ENCODE measurements at regions of chr18 and their contacts with region 1.

Region 1: DNA sequence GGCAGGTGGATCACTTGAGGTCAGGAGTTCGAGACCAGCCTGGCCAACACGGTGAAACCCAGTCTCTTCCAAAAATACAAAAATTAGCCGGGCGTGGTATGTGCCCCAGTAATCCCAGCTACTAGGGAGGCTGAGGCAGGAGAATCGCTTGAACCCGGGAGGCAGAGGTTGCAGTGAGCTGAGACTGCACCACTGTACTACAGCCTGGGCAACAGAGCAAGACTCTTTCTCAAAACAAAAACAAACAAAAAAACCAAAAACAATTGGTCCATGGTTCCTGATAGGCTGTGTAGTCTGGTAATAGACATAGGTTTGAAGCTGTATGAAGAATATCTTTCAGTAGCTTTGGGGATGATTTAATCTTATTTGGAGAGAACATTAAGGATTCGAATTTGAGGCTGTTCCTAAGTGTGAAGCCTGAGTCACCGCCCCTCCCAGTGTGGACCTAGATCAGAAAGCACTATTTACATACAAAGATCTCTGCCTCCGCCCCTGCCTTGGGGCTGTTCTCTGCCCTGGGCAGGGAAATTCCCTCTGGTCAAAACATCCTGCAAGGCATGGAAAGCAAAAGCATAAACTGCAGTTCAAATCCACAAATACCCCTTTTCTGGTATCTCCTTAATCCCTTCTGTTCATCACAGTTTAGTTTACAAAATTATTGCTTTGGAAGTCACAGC is 52.8 kb upstream of the PMAIP1 start:
- DNase-seq: no peak
- ATAC-seq: no peak
- H3K4me3 ChIP-seq: no peak overlapping the region
- H3K27ac ChIP-seq: no peak overlapping the region
- H3K4me1 ChIP-seq: no peaks in the 10 kb centered on the region
- H3K27me3 ChIP-seq: no peaks in the 10 kb centered on the region
- CTCF ChIP-seq: no peak

Region 2: DNA sequence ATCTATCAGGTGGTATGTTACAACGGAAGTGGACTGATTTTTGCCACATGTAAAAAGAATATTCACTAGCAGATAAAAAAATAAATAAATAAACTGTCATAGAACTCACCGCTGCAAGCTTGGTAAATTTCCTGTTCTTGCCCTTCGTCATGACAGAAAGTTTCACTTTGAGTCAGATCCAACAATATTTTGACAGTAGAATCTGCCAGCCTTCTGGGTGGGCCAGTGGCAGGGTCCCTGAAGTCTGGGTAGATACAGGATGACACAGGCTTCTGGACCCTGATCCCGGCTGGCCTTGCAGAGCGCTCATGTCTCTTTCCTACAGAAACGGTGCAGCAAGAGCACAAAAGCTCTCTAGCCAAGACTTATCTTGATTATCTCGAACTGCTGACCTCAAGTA is 44.9 kb before region 1 on chr18:
- intact Hi-C with region 1: no loop called
- DNase-seq: no peak
- ATAC-seq: no peak
- H3K4me3 ChIP-seq: no peak overlapping the region
- H3K27ac ChIP-seq: no peak overlapping the region
- H3K4me1 ChIP-seq: no peaks in the 10 kb centered on the region
- H3K27me3 ChIP-seq: no peaks in the 10 kb centered on the region
- CTCF ChIP-seq: no peak

Region 3: DNA sequence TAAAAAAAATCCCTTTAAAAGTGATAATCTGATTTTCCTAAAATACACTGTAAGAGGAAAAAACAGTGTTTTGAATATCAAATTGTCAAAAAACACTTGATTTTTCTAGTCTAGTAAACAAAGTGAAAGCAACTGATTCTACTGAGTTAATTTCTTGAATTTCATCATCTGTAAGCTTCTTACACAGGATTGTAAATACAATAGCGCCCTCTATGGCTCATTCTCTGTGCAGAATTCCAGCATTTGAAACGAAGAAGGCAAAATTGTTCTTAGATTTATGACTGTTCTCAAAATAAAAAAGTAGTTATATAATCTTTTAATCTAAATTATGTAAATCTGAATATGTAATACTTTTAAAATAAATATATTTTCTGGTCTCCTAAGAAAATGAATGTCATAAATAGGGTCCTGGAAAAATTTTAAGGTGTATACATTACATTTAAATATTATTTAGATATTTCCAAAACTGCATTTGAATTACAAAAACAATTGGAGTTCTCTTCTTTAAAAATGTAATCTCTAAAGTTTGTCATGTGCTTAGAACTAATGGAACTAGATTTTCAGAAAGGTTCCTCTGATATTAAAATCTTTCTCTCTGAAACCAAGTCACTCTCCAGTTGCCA is 702.5 kb after region 1 on chr18:
- intact Hi-C with region 1: loop called in 1 of 2 experiments (anchors 10 kb)
- DNase-seq: no peak
- ATAC-seq: no peak
- H3K4me3 ChIP-seq: no peak overlapping the region
- H3K27ac ChIP-seq: no peak overlapping the region
- H3K4me1 ChIP-seq: no peaks in the 10 kb centered on the region
- H3K27me3 ChIP-seq: no peaks in the 10 kb centered on the region
- CTCF ChIP-seq: peak; percentile 53

Measured in psoas muscle (tissue), 8 donors.